ENCODE measurements at regions of chr5 and their contacts with region 1.

Region 1: GRCh38 chr5:111550279-111551020 is 38.1 kb upstream of the STARD4 start:
- DNase-seq: peak; percentile 85
- H3K4me3 ChIP-seq: no peak overlapping the region
- H3K27ac ChIP-seq: no peak overlapping the region
- H3K4me1 ChIP-seq: peaks cover 6% of the 10 kb centered on the region
- CTCF ChIP-seq: peak; percentile 87

Region 2: GRCh38 chr5:111685971-111686370 is 135.5 kb after region 1 on chr5:
- CTCF ChIA-PET with region 1: no interaction called
- POLR2A ChIA-PET with region 1: interaction called, 3 read pairs
- intact Hi-C with region 1: loop called (anchors 2 kb)
- DNase-seq: peak; percentile 65
- H3K4me3 ChIP-seq: no peak overlapping the region
- H3K27ac ChIP-seq: no peak overlapping the region
- H3K4me1 ChIP-seq: peaks cover 10% of the 10 kb centered on the region
- CTCF ChIP-seq: peak; percentile 73

Region 3: DNA sequence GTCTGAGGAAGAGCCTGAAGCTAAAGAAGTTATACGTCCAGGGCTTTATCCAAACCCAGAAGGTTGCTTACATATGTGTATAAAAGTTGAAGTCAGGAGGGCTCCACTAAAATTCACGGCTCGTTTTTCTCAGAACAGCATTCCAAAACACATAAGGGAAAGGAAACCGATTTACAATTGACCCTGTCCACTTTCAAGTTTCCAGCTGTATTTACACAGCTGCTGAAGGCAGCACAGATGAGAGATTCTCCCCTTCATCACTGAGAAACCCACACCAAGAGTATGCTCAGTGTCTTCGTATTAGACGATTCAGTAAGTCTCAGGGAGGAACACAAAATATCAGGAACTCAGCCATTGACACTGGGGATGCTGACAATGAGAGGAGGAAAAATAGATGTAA is 212.4 kb after region 1 on chr5:
- CTCF ChIA-PET with region 1: no interaction called
- POLR2A ChIA-PET with region 1: no interaction called
- intact Hi-C with region 1: loop called (anchors 10 kb)
- DNase-seq: no peak
- H3K4me3 ChIP-seq: no peak overlapping the region
- H3K27ac ChIP-seq: no peak overlapping the region
- H3K4me1 ChIP-seq: peaks cover 12% of the 10 kb centered on the region
- CTCF ChIP-seq: no peak

Region 4: DNA sequence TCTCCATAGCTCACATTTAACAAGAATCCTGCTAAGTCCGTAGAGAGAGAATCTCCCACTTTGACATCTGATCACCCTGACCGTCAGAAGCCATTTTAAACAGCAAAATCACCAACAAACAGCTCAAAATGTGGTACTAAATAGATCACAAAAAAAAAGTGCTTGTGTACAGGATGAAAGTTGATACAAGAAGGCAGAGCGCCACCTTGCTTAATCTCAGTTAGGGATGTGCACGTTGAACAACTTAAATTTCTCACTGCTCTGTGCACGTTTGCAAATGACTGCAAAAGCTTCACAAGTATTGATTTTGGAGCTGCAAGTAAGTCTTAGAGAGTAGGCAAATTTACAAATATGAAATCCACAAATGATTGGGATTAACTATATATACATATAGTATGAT is 269.6 kb after region 1 on chr5:
- CTCF ChIA-PET with region 1: interaction called, 6 read pairs
- POLR2A ChIA-PET with region 1: no interaction called
- intact Hi-C with region 1: loop called (anchors 5 kb)
- DNase-seq: peak; percentile 41
- H3K4me3 ChIP-seq: no peak overlapping the region
- H3K27ac ChIP-seq: no peak overlapping the region
- H3K4me1 ChIP-seq: no peaks in the 10 kb centered on the region
- CTCF ChIP-seq: peak; percentile 65